Activated T-helper 1 cell treated with anti-CD3 and anti-CD28 coated beads, Interleukin-12 subunit alpha, Interleukin-12 subunit beta, Interleukin-2, Interleukin-4 antibody, amounts not matched to agents 30 ng/mL and 10 ng/mL and 1 ng/mL, durations not matched to agents 14 hours and 24 hours and 36 hours (primary cell): ENCODE measurements at regions of chr7 and their contacts with region 1.

Region 1: DNA sequence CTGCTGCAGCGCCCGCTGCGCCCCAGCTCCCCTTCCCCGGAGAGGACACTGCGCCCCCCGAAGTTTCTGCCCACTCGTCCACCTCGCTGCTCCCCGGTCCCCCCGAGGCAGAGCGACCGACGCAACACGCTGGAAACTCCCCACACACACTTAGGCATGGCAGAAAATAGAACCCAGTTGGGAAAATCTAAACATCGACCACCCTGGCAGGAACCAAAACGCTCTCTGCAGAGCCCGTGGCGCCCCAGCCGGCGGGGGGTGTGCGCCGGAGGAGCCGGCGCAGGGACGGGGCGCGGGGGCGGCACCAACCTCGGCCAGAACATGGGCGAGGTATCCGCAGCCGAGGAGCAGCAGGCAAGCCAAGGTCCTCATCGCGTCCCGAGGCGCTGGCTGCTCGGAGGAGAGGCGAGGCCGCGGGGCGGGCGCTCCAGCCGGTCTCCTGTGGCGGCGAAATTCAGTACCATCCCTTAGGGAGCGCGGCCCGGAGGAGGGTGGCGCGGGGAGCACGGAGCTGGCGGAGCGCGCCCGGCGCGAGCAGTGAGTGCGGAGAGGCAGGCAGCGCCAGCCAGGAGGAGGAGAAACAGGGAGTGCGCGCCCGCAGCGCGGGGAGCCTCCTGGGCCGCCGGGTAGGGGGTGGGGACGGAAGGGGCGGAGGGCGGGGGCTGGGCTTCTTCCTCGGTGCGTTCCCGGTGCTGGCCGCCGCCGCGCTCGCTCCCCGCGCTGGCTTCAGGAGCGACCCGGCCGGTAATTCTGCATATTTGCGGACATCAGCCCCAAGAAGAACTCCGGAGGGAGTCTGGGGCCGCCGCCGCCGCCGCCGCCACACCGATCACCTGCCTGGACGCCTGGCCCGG is 789 bp downstream of the PDGFA start:
- DNase-seq: peak; percentile 9
- H3K4me3 Mint-ChIP-seq: peak overlapping the region; percentile 86
- H3K27ac Mint-ChIP-seq: peak overlapping the region; percentile 76
- H3K4me1 Mint-ChIP-seq: peaks cover 3% of the 10 kb centered on the region
- H3K27me3 Mint-ChIP-seq: peaks cover 22% of the 10 kb centered on the region

Region 2: GRCh38 chr7:362402-363096 is 156.3 kb before region 1 on chr7:
- intact Hi-C with region 1: loop called (anchors 5 kb)
- DNase-seq: peak; percentile 21
- H3K4me3 Mint-ChIP-seq: peak overlapping the region; percentile 48
- H3K27ac Mint-ChIP-seq: peak overlapping the region; percentile 78
- H3K4me1 Mint-ChIP-seq: peaks cover 51% of the 10 kb centered on the region
- H3K27me3 Mint-ChIP-seq: peaks cover 9% of the 10 kb centered on the region

Region 3: DNA sequence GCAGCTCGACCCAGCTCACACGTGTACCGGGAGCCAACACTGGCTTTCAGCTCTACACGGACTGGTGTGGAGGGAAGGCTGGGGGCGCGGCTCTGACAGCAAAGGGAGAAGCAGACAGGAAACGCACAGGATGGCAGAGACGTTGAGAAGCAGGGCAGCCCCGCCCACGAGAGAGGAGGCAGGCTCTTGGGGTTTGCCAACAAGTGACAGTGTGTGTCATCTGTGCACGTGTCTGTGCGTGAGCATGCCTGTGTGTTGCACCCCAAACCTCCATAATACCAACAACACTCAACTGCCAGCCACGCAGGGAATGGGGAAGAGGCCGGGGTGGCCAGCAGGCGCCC is 65.2 kb after region 1 on chr7:
- intact Hi-C with region 1: loop called (anchors 1 kb)
- DNase-seq: peak; percentile 83
- H3K4me3 Mint-ChIP-seq: peak overlapping the region; percentile 82
- H3K27ac Mint-ChIP-seq: peak overlapping the region; percentile 87
- H3K4me1 Mint-ChIP-seq: peaks cover 35% of the 10 kb centered on the region
- H3K27me3 Mint-ChIP-seq: peaks cover 2% of the 10 kb centered on the region

Region 4: DNA sequence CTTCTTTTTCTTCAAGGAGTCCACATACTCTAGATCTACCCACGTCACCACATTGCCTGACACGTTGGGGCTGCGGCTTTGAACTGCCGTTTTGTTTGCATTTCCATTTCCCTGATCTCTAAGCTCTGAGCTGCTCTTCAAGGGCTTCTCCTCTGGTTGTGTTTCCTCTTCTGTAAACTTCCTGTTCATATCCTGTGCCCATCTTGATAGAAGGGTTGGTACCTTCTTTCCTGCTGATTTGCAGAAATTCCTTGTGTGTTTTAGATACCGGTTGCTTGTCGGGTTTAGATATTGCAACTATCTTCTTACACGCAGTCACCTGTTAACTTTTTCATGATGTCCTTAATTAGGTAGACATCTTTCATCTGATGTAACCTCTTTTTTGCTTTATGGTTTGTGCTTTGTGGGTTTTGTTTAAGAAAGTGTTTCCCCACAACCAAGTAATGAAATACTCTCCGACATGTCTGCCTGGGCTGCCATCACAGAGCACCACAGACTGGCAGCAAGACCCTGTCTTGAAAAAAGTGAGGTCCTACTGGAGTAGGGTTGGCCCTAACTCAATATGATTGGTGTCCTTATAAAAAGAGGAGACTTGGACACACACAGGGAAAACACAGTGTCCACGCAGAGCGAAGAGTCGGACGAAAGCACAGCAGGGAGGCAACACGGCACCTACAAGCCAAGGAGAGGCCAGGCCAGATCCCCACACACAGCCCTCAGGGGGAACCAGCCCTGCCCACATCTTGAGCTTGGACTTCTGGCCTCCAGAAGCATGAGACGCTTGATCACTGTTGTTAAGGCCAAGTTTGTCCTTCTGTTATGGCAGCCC is 99.9 kb after region 1 on chr7:
- intact Hi-C with region 1: loop called (anchors 5 kb)
- DNase-seq: peak; percentile 71
- H3K4me3 Mint-ChIP-seq: peak overlapping the region; percentile 82
- H3K27ac Mint-ChIP-seq: peak overlapping the region; percentile 99
- H3K4me1 Mint-ChIP-seq: peaks cover 48% of the 10 kb centered on the region
- H3K27me3 Mint-ChIP-seq: no peaks in the 10 kb centered on the region

Region 5: GRCh38 chr7:1076181-1077072 is 557.6 kb after region 1 on chr7:
- intact Hi-C with region 1: no loop called
- DNase-seq: no peak
- H3K4me3 Mint-ChIP-seq: no peak overlapping the region
- H3K27ac Mint-ChIP-seq: no peak overlapping the region
- H3K4me1 Mint-ChIP-seq: no peaks in the 10 kb centered on the region
- H3K27me3 Mint-ChIP-seq: no peaks in the 10 kb centered on the region

Region 6: GRCh38 chr7:1240517-1241257 is 721.8 kb after region 1 on chr7:
- intact Hi-C with region 1: loop called (anchors 5 kb)
- DNase-seq: no peak
- H3K4me3 Mint-ChIP-seq: no peak overlapping the region
- H3K27ac Mint-ChIP-seq: peak overlapping the region; percentile 52
- H3K4me1 Mint-ChIP-seq: no peaks in the 10 kb centered on the region
- H3K27me3 Mint-ChIP-seq: peaks cover 55% of the 10 kb centered on the region